H1 (cell line): ENCODE measurements at regions of chr17 and their contacts with region 1.

Region 1: GRCh38 chr17:28878981-28879380 is 18.6 kb downstream of the FLOT2 start:
- DNase-seq: peak; percentile 67 to 75
- H3K4me3 ChIP-seq: no peak overlapping the region
- H3K27ac ChIP-seq: no peak overlapping the region
- H3K4me1 ChIP-seq: no peaks in the 10 kb centered on the region; a peak in 3 of 7 replicates
- H3K27me3 ChIP-seq: no peaks in the 10 kb centered on the region; a peak in 1 of 7 replicates
- CTCF ChIP-seq: peak; percentile 81 to 96 (median 85)
- EP300 ChIP-seq: no peak
- POLR2A ChIP-seq: no peak
- RAD21 ChIP-seq: peak; percentile 90 to 94

Region 2: DNA sequence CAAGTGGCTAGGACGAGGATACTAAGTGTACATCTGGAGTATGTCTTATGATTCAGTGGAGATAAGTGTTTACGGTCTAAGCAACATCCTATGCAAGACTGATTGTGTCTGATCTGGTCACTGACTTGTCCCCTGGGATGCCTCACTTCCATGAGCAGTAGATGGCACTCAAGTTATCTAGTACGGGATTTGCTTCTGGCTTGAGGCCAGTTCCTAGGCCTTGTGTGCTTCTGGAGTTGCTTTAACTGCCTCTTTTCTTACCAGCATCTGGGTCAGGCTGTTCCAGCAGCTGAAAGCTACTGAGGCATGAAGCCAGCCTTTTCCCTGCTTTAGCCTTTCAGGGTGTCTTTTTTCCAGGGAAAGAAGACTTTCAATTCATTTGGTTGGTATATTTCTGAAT is 194.0 kb before region 1 on chr17:
- CTCF ChIA-PET with region 1: no interaction called
- POLR2A ChIA-PET with region 1: no interaction called
- DNase-seq: no peak
- H3K4me3 ChIP-seq: no peak overlapping the region
- H3K27ac ChIP-seq: no peak overlapping the region
- H3K4me1 ChIP-seq: no peaks in the 10 kb centered on the region
- H3K27me3 ChIP-seq: no peaks in the 10 kb centered on the region
- CTCF ChIP-seq: no peak
- EP300 ChIP-seq: no peak
- POLR2A ChIP-seq: no peak
- RAD21 ChIP-seq: no peak

Region 3: DNA sequence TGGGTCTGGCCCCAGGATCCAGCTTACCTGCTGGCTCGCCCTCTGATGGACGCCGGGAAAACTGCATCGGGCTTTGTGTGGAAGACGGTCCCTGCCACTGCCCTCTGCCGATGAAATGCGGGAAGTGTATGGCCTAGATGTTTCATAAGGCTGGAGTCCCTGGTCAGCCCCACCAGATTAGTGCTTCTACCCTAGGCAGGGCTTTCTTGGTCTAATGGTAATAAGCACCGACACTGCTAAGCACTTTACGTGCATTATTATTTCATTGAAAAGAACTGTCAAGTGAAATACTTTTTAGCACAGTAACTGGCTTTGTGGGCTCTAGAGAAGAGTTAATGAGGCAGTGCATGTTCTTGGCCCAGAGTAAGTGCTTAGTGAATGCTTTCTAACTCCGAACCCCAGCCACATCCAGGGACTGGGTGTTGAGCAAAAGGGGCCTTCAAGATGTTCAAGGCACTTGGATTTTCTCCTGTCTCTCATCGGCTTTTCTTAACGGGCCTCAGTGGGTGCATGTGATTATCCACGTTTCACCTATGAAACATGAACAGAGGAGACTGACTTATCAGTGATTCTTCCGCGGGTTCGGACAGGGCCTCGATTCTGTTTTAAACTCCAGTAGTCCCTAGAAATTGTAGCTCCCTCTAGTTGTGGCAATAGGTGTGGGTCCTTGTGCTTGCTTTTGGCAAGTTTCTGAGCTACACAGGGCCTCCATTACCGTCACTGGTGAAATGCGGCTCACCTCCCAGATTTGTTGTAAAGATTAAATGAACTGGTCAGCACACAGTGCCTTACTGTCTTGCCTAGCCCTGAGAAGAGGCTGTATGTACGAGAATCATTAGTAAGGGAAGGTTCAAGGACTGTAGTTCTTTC is 128.6 kb before region 1 on chr17:
- CTCF ChIA-PET with region 1: interaction called, 10 read pairs
- POLR2A ChIA-PET with region 1: interaction called, 8 read pairs
- DNase-seq: peak in 1 of 2 experiments; percentile 96
- H3K4me3 ChIP-seq: no peak overlapping the region
- H3K27ac ChIP-seq: no peak overlapping the region
- H3K4me1 ChIP-seq: peaks cover 0 to 30% (median 24%) of the 10 kb centered on the region in 4 experiments; a peak in 6 of 7 replicates
- H3K27me3 ChIP-seq: no peaks in the 10 kb centered on the region
- CTCF ChIP-seq: peak; percentile 98 to 100 (median 100)
- EP300 ChIP-seq: 0 out of 3 replicates have a peak, but pooled peaks of 1 of the 2 experiments have one; percentile 5
- POLR2A ChIP-seq: peak in 1 of 2 experiments; percentile 73; a peak in 2 of 3 replicates
- RAD21 ChIP-seq: peak; percentile 71 to 81

Region 4: GRCh38 chr17:28861393-28862203 is 17.4 kb before region 1 on chr17:
- CTCF ChIA-PET with region 1: interaction called, 14 read pairs
- POLR2A ChIA-PET with region 1: interaction called, 6 read pairs
- DNase-seq: no peak
- H3K4me3 ChIP-seq: 0 out of 8 replicates have a peak overlapping the region, but pooled peaks of 1 of the 4 experiments have one; percentile 33
- H3K27ac ChIP-seq: no peak overlapping the region
- H3K4me1 ChIP-seq: peaks cover 0 to 6% (median 0%) of the 10 kb centered on the region in 4 experiments; a peak in 2 of 7 replicates
- H3K27me3 ChIP-seq: no peaks in the 10 kb centered on the region
- CTCF ChIP-seq: no peak
- EP300 ChIP-seq: no peak
- POLR2A ChIP-seq: no peak
- RAD21 ChIP-seq: no peak

Region 5: GRCh38 chr17:28916302-28916934 is 37.4 kb after region 1 on chr17:
- CTCF ChIA-PET with region 1: interaction called, 20 read pairs
- POLR2A ChIA-PET with region 1: no interaction called
- DNase-seq: no peak
- H3K4me3 ChIP-seq: no peak overlapping the region
- H3K27ac ChIP-seq: no peak overlapping the region
- H3K4me1 ChIP-seq: no peaks in the 10 kb centered on the region; a peak in 2 of 7 replicates
- H3K27me3 ChIP-seq: no peaks in the 10 kb centered on the region
- CTCF ChIP-seq: peak; percentile 30 to 61 (median 47)
- EP300 ChIP-seq: no peak
- POLR2A ChIP-seq: no peak
- RAD21 ChIP-seq: peak; percentile 33 to 51; a peak in 3 of 4 replicates

Region 6: DNA sequence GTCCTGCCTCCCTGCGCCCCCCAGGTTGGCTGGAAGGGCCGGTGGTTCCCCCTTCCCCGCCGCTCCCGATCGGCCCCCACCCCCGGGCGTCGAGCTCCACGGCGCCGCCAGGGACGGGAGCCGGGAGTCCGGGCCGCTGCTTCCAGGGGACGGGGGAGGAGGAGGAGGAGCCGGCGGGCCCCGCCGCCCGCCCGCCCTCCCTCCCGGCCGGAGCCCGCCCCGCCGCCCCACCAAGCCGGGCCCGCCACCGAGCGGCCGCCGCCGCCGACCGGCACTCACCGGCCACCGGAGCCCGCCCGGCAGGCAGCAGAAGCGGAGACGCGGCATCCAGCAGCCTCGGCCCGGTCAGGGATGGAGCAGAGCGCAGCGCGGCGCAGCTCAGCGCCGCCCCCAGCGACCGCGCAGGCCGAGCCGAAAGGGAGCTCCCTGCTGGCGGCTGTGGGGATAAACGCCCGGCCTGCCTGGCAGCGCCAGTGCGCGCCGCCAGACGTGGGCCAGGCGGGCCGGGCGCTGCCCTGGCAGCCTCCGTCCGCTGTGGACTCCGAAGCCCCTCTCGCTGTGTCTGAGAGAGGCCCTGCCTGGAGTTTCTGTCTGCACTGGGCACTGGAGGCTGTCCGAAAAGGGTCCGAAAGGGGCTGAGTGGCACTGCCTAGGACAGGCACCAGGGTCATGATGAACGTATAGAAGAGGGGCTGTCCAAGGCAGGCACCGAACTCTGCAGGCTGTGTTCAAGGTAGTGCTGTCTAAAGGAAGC is 301.2 kb after region 1 on chr17 and contains the start of gene MYO18A:
- CTCF ChIA-PET with region 1: no interaction called
- POLR2A ChIA-PET with region 1: no interaction called
- DNase-seq: peak; percentile 41 to 89
- H3K4me3 ChIP-seq: peak within 1 kb of the TSS; percentile 41 to 70 (median 63)
- H3K27ac ChIP-seq: no peak within 1 kb of the TSS; the same call in 1 of the 2 replicates
- H3K4me1 ChIP-seq: peaks cover 6 to 30% (median 16%) of the 10 kb centered on the region in 4 experiments
- H3K27me3 ChIP-seq: peaks cover 0 to 10% (median 5%) of the 10 kb centered on the region in 4 experiments; a peak in 3 of 7 replicates
- CTCF ChIP-seq: peak; percentile 85 to 99 (median 90)
- EP300 ChIP-seq: no peak
- POLR2A ChIP-seq: no peak
- RAD21 ChIP-seq: peak; percentile 40 to 74
- total RNA-seq, gene MYO18A: 36.6 and 43.8 TPM in 2 replicates